ENCODE measurements at regions of chr1 and their contacts with region 1.

Region 1: DNA sequence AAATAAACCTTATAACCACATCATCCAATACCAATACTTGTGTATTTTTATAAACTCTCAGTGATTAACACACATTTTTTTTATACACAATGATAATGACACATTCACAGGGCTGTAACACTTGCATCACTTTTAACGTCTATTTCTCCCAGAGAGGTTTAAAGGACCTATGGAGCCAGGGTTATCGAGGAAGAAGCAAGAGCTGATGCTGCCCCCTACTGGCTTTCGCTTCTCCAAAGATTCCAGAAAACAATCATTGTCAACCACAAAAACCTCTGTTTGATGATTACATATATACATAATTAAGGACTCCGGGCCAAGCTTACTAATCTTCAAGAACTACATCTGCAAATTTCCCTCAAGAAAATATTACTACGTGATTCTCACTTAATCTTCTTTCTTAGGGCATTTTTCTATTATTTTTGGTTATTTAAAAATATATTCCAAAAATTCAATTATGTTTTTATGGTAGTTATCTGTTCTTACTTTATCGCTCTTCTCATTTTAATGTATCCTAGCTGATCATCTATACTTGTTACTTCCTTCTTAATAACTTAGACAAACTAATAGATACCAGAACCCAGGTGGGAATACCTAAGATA is 214.5 kb downstream of the VAV3 start:
- DNase-seq: peak; percentile 53
- ATAC-seq: no peak
- H3K4me3 ChIP-seq: no peak overlapping the region
- H3K4me3 Mint-ChIP-seq: no peak overlapping the region
- H3K27ac ChIP-seq: no peak overlapping the region
- H3K27ac Mint-ChIP-seq: no peak overlapping the region
- H3K4me1 ChIP-seq: no peaks in the 10 kb centered on the region
- H3K4me1 Mint-ChIP-seq: no peaks in the 10 kb centered on the region
- H3K27me3 ChIP-seq: no peaks in the 10 kb centered on the region
- H3K27me3 Mint-ChIP-seq: no peaks in the 10 kb centered on the region
- CTCF ChIP-seq: peak; percentile 74

Region 2: GRCh38 chr1:106022312-106022902 is 1728.1 kb before region 1 on chr1:
- CTCF ChIA-PET with region 1: no interaction called
- POLR2A ChIA-PET with region 1: no interaction called
- intact Hi-C with region 1: loop called (anchors 5 kb)
- DNase-seq: no peak
- ATAC-seq: no peak
- H3K4me3 ChIP-seq: no peak overlapping the region
- H3K4me3 Mint-ChIP-seq: no peak overlapping the region
- H3K27ac ChIP-seq: no peak overlapping the region
- H3K27ac Mint-ChIP-seq: no peak overlapping the region
- H3K4me1 ChIP-seq: no peaks in the 10 kb centered on the region
- H3K4me1 Mint-ChIP-seq: peaks cover 2% of the 10 kb centered on the region
- H3K27me3 ChIP-seq: no peaks in the 10 kb centered on the region
- H3K27me3 Mint-ChIP-seq: no peaks in the 10 kb centered on the region
- CTCF ChIP-seq: peak; percentile 69

Region 3: GRCh38 chr1:106515375-106515774 is 1235.1 kb before region 1 on chr1:
- CTCF ChIA-PET with region 1: no interaction called
- POLR2A ChIA-PET with region 1: no interaction called
- intact Hi-C with region 1: no loop called
- DNase-seq: no peak
- ATAC-seq: no peak
- H3K4me3 ChIP-seq: no peak overlapping the region
- H3K4me3 Mint-ChIP-seq: no peak overlapping the region
- H3K27ac ChIP-seq: no peak overlapping the region
- H3K27ac Mint-ChIP-seq: no peak overlapping the region
- H3K4me1 ChIP-seq: no peaks in the 10 kb centered on the region
- H3K4me1 Mint-ChIP-seq: no peaks in the 10 kb centered on the region
- H3K27me3 ChIP-seq: no peaks in the 10 kb centered on the region
- H3K27me3 Mint-ChIP-seq: no peaks in the 10 kb centered on the region
- CTCF ChIP-seq: no peak

Region 4: DNA sequence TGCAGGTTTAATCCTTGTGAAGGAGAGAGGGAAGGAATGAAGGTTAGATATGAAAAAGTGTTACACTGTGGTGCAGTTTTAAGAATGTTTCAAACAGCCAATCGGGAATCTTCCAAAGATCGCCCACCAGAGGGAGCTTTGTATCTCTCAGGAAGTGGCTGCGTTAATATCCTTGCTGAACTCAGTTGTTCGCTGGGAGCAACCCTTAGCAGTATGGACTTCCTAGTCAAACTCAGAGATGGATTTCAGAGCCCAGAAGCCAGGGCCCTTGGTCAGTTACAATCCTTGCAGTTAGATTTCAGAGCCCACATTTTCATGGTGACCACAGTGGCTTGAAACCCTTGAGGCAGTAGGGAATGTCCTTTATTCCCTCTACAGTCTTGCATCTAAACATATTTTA is 473.4 kb before region 1 on chr1:
- CTCF ChIA-PET with region 1: no interaction called
- POLR2A ChIA-PET with region 1: no interaction called
- intact Hi-C with region 1: loop called (anchors 5 kb)
- DNase-seq: peak; percentile 35
- ATAC-seq: no peak
- H3K4me3 ChIP-seq: no peak overlapping the region
- H3K4me3 Mint-ChIP-seq: no peak overlapping the region
- H3K27ac ChIP-seq: no peak overlapping the region
- H3K27ac Mint-ChIP-seq: no peak overlapping the region
- H3K4me1 ChIP-seq: peaks cover 2 to 5% of the 10 kb centered on the region in 2 donors
- H3K4me1 Mint-ChIP-seq: peaks cover 15% of the 10 kb centered on the region
- H3K27me3 ChIP-seq: no peaks in the 10 kb centered on the region
- H3K27me3 Mint-ChIP-seq: no peaks in the 10 kb centered on the region
- CTCF ChIP-seq: peak; percentile 34

Region 5: GRCh38 chr1:107762751-107763390 is 12.4 kb after region 1 on chr1:
- CTCF ChIA-PET with region 1: interaction called, 11 read pairs
- POLR2A ChIA-PET with region 1: no interaction called
- intact Hi-C with region 1: no loop called
- DNase-seq: no peak
- ATAC-seq: no peak
- H3K4me3 ChIP-seq: no peak overlapping the region
- H3K4me3 Mint-ChIP-seq: no peak overlapping the region
- H3K27ac ChIP-seq: no peak overlapping the region
- H3K27ac Mint-ChIP-seq: no peak overlapping the region
- H3K4me1 ChIP-seq: no peaks in the 10 kb centered on the region
- H3K4me1 Mint-ChIP-seq: no peaks in the 10 kb centered on the region
- H3K27me3 ChIP-seq: no peaks in the 10 kb centered on the region
- H3K27me3 Mint-ChIP-seq: no peaks in the 10 kb centered on the region
- CTCF ChIP-seq: no peak

Region 6: DNA sequence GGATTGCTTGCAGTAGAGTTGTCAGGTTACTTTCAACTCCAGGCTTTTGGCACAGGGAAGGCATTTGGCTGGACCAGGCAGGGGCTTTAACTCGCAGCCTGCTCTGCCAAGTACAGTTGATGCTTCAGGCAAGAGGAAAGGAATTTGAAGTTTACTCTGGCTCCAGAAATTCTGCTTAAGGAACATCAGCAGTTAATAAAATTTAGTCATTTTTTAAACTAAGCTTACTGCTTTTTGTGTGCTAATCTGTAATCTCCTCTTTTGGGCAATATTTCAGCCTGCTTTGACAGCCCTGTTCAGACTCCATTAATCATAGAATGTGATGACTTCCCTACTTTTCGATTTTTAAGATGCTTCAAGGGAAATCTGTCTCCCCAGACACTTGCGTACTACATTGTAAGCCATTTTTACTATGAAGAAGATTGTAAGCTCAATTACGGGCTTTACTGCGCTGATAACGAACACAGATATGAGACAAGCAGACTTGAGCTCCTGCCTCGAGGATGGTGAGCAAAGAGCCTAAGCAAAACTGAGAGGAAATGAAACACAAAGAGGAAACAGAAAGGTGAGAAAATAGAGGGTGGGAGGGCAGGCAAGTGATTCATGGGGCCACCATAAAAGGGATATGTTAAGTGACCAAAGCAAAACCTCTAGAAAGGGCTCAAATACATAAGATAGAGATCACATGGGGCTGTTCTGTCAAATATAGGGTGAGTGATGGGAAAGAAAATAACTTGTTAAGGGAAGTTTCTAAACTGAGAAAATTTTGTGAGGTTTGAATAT is 291.1 kb after region 1 on chr1:
- CTCF ChIA-PET with region 1: no interaction called
- POLR2A ChIA-PET with region 1: no interaction called
- intact Hi-C with region 1: no loop called
- DNase-seq: peak; percentile 68
- ATAC-seq: peak; percentile 60
- H3K4me3 ChIP-seq: peak overlapping the region in 1 of 5 experiments; percentile 25
- H3K4me3 Mint-ChIP-seq: peak overlapping the region; percentile 67
- H3K27ac ChIP-seq: peak overlapping the region; percentile 61 to 80
- H3K27ac Mint-ChIP-seq: peak overlapping the region; percentile 79
- H3K4me1 ChIP-seq: peaks cover 34 to 37% of the 10 kb centered on the region in 2 donors
- H3K4me1 Mint-ChIP-seq: peaks cover 38% of the 10 kb centered on the region
- H3K27me3 ChIP-seq: no peaks in the 10 kb centered on the region
- H3K27me3 Mint-ChIP-seq: no peaks in the 10 kb centered on the region
- CTCF ChIP-seq: no peak

Measured in B cell (primary cell).